ENCODE measurements at regions of chr6 and their contacts with region 1.

Region 1: GRCh38 chr6:30616811-30617564 is at the start of gene PPP1R10:
- DNase-seq: peak; percentile 99
- H3K4me3 Mint-ChIP-seq: peak within 1 kb of the TSS; percentile 87
- H3K27ac Mint-ChIP-seq: peak within 1 kb of the TSS; percentile 95
- H3K4me1 Mint-ChIP-seq: peaks cover 37% of the 10 kb centered on the region
- H3K27me3 Mint-ChIP-seq: no peaks in the 10 kb centered on the region
- total RNA-seq, gene PPP1R10: 47.1 to 49.1 TPM

Region 2: DNA sequence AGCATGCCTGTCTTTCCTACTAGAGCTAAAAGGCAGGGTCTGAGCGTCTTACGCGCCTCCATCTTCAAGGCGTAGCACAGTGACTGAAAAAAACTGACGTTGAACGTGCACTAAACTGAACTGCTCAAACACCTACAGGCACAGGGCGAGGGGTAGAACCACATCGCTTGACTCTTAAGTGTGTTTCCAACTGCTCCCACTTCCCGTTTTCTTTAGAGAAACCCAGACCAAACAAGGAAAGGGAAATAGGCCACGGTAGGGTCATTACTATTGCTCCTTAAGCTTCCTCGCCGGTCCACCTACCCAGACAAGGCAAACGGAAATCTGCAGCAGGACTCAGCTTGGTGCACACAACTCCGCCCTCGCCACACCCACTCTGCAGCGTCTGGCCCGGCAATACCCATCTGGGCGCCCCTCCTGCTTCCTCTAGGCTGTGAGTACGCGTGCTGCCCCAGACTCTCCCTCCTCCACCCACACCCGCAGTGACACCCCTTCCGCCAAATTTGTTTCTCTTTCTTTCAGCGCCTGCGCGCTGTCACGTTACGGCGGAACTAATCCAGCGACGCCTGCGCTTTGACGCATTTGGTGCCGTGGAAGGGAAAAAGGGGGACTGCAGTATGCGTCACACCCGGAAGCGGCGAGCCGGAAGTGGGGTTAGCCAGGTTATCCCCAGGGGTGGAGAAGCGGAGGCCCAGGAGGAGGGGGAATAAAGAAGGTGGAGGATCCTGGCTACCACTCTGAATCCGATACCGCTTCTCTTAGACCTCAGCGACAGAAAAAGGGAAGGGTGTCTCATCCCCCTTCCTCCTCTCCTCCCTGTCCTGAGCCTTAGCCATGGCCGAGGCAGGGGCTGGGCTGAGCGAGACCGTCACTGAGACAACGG is 550.2 kb before region 1 on chr6 and contains the start of gene PPP1R11:
- CTCF ChIA-PET with region 1: no interaction called
- intact Hi-C with region 1: loop called (anchors 10 kb)
- DNase-seq: peak; percentile 99
- H3K4me3 Mint-ChIP-seq: peak within 1 kb of the TSS; percentile 90
- H3K27ac Mint-ChIP-seq: peak within 1 kb of the TSS; percentile 96
- H3K4me1 Mint-ChIP-seq: peaks cover 48% of the 10 kb centered on the region
- H3K27me3 Mint-ChIP-seq: peaks cover 7% of the 10 kb centered on the region
- total RNA-seq, gene PPP1R11: 42.8 to 46.6 TPM

Region 3: DNA sequence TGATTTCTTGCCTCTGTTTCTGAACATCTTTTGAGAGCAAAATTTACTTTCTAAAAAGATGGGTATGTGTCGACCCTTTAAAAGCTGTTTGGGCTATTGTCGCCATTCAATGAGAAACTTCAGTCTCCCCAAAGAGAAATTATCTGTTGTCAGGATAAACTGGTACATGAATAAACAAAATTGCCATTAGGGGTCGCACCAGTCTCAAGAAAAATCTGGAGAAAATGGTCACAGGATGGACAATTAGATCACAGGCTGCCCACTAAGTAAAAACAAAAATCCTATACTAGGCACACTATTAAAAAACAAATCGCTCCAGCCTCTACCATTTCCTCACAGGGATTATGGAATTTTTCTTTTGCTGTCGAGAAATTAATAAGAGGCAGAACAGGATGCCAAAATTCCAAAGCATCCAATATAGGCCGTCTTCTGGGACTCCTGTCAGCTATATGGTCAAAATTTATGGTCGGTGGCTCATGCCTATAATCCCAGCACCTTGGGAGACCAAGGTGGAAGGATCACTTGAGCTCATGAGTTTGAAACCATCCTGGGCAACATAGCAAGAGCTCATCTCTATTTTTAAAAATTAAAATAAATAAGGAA is 133.2 kb before region 1 on chr6:
- CTCF ChIA-PET with region 1: interaction called, 18 read pairs
- intact Hi-C with region 1: no loop called
- DNase-seq: peak; percentile 54
- H3K4me3 Mint-ChIP-seq: no peak overlapping the region
- H3K27ac Mint-ChIP-seq: no peak overlapping the region
- H3K4me1 Mint-ChIP-seq: peaks cover 44% of the 10 kb centered on the region
- H3K27me3 Mint-ChIP-seq: peaks cover 35% of the 10 kb centered on the region

Region 4: DNA sequence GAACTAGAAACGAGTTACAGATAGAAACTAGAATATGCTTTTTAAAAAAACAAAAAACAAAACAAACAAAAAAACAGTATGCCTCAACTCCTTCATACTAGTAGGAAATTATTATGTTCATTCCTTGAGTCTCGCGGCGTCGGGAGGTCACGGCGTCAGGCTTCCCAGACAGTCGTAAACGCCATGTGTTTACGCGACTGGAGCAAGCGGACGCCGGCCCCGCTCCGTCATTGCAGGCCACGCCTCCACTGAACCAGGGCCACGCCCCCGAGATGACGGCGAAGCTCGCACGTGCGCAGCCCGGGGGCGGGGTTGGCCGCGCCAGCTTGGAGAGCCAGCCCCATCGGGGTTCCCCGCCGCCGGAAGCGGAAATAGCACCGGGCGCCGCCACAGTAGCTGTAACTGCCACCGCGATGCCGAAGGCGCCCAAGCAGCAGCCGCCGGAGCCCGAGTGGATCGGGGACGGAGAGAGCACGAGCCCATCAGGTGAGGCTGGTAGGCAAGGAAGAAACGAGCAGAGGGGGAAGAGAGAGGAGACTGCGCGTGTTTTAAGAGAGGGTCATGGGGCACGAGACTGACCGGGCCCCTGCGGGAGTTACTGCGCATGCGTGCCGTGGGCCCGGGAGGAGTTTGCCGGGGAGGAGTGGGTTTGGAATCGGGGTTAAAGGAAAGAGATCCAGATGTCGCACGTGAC is 45.8 kb before region 1 on chr6 and contains the start of gene ABCF1:
- CTCF ChIA-PET with region 1: interaction called, 3 read pairs
- intact Hi-C with region 1: loop called (anchors 1 kb)
- DNase-seq: peak; percentile 99
- H3K4me3 Mint-ChIP-seq: peak within 1 kb of the TSS; percentile 98
- H3K27ac Mint-ChIP-seq: peak within 1 kb of the TSS; percentile 95
- H3K4me1 Mint-ChIP-seq: peaks cover 70% of the 10 kb centered on the region
- H3K27me3 Mint-ChIP-seq: no peaks in the 10 kb centered on the region
- total RNA-seq, gene ABCF1: 79.5 to 82.7 TPM

Region 5: GRCh38 chr6:30635834-30636233 is 18.8 kb after region 1 on chr6:
- CTCF ChIA-PET with region 1: no interaction called
- intact Hi-C with region 1: no loop called
- DNase-seq: no peak
- H3K4me3 Mint-ChIP-seq: no peak overlapping the region
- H3K27ac Mint-ChIP-seq: no peak overlapping the region
- H3K4me1 Mint-ChIP-seq: peaks cover 5% of the 10 kb centered on the region
- H3K27me3 Mint-ChIP-seq: no peaks in the 10 kb centered on the region

Region 6: DNA sequence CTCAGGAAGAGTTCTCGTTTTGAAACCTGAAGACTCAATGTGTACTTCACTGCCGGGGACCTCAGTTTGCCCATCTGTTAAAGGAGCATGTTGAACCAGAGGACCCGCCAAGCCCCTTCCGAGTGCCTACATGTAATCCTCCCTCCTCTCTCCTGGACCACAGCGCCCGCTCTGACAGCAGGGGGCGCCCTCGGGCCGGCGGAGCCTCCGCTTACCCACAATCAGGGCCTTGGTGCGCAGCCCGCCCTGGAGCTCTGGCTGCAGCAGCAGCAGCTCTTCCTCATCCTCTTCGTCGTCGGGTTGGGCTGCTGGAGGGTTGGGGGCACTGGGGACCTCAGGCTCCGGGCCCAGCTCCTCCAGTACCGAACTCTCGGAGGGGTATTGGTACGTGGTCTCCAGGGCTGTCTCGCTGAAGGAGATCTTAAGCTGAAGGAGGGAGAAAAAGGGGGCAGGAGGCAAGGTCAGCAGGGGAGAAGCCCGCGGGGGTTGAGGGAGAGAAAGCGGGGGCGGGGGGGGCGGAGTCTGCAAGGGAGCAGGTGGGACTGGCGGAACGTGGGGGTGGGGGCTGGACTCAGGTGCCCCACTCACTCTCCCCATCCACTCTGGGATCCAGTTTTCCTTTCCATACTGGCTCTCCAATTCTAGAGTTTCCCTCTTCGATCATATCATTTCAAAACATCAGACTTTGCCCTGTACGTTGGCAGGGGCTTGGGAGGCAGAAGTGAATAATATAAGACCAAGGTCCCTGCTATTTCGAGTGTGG is 62.2 kb after region 1 on chr6:
- CTCF ChIA-PET with region 1: interaction called, 5 read pairs
- intact Hi-C with region 1: loop called (anchors 1 kb)
- DNase-seq: peak; percentile 95
- H3K4me3 Mint-ChIP-seq: peak overlapping the region; percentile 96
- H3K27ac Mint-ChIP-seq: peak overlapping the region; percentile 100
- H3K4me1 Mint-ChIP-seq: peaks cover 21% of the 10 kb centered on the region
- H3K27me3 Mint-ChIP-seq: no peaks in the 10 kb centered on the region

Region 7: DNA sequence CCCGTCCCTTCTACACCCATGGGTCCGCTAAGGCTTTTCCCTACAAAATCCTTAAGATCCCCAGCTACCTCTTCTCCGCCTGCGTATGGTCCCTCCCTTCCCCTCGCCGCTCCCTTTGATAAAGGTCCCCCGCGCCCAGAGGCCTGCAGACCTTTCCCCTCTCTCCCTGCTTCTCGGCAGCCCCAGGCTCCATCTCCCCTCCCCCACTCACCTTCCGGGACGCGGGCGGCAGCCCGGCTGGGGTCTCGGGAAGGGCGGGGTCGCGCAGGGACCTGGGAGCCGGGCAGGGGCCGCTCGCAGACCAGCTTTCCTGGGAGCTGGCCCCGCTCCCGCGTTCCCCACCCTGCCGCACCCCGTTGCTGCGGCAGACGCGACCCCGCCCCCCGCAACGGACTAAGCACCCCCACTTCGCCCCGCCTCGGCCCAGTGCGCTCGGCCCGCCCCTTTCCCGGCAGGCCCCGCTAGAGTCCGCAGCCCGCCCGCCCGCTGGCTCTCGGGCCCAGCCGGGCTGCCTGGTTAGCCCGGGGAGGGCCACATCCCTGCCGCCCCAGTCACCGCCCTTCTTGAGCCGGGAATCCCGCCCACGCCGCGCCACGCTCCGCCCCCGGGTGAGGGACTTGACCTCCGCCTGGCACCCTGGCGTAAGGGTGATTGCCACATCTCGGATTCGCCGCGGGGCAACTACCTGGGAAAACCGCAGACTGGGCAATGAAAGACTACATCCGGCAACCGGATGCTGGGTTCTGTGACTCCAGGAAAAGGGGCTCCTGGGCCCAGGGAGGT is 125.5 kb after region 1 on chr6 and contains the start of gene FLOT1:
- CTCF ChIA-PET with region 1: no interaction called
- intact Hi-C with region 1: loop called (anchors 5 kb)
- DNase-seq: peak; percentile 96
- H3K4me3 Mint-ChIP-seq: peak within 1 kb of the TSS; percentile 94
- H3K27ac Mint-ChIP-seq: peak within 1 kb of the TSS; percentile 96
- H3K4me1 Mint-ChIP-seq: peaks cover 61% of the 10 kb centered on the region
- H3K27me3 Mint-ChIP-seq: no peaks in the 10 kb centered on the region
- total RNA-seq, gene FLOT1: 162 to 173 TPM

Region 8: DNA sequence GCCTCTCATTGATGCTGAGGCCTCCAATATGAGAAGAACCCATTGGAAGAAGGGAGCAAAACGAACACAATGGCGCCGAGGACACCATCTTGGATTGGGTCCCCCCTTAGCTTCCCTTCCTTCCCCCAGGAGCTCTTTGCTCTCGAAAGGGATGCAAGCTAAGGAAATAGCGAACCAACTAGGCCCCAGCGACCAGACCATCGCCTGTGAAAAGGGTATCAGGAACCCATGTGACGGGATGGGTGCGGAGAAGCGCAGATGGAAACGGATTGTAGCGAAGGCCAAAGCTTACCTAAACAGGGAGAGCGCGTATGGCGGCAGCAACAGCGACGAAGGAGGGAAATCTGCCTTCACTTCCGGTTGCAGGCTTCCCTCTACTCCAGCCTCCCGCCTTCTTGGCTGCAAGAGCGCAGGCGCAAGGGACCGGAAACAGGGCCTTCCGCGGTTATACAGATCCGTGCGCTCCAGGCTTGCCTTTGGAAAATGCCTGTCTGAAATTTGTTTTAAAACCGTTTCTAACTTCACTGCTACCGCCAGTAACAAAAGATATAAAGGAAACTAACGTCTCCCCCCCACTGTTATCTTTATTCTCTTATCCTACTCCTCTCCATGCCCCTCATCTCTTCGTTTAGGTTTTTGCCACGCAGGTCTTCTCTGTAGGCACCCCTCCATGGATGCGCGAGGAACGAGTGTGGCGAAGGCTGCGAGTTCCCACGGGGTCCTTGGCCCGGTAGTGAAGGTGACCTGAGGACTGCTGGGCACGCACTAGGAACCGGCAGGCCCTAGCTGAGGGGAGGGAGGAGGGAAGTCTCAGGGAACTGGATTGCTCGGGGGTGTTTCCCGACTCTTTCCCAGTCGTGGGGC is 924.9 kb after region 1 on chr6 and contains the start of gene DDX39B:
- CTCF ChIA-PET with region 1: no interaction called
- intact Hi-C with region 1: loop called (anchors 5 kb)
- DNase-seq: peak; percentile 95
- H3K4me3 Mint-ChIP-seq: peak within 1 kb of the TSS; percentile 93
- H3K27ac Mint-ChIP-seq: peak within 1 kb of the TSS; percentile 99
- H3K4me1 Mint-ChIP-seq: peaks cover 40% of the 10 kb centered on the region
- H3K27me3 Mint-ChIP-seq: no peaks in the 10 kb centered on the region
- total RNA-seq, gene DDX39B: 600 to 624 TPM